Mammary epithelial cell (primary cell): ENCODE measurements at regions of chr4 and their contacts with region 1.

Region 1: DNA sequence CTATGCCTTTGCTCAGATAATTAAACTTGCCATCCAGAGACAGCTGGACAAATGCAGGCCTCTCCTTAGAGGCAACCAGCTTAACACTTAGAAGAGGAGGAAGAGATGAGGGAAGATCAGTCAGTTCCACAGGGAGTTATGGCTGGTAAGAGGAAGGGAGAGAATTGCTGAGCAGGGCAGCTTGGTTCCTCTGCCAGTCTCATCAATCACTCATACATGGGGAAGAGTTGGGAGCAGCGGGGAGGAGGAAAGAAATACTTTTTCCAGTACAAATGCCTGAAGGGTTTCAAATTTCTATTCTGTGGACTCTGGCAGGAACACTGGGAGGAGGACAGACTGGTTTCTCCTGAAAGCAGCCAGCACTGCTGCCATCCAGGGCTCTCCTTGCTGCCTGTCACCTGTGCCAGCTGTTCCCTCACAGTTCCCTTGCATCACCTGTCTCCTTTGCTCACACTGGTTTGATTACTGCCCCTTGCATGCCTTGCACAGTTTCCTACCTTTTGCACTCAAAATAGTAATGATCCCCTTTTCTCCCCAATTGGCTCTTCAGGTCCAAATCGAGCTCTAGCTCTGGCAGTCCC is 59.5 kb downstream of the PGRMC2 start:
- DNase-seq: no peak
- H3K4me3 ChIP-seq: no peak overlapping the region
- H3K27ac ChIP-seq: no peak overlapping the region
- H3K4me1 ChIP-seq: peaks cover 8% of the 10 kb centered on the region
- H3K27me3 ChIP-seq: no peaks in the 10 kb centered on the region
- CTCF ChIP-seq: no peak

Region 2: DNA sequence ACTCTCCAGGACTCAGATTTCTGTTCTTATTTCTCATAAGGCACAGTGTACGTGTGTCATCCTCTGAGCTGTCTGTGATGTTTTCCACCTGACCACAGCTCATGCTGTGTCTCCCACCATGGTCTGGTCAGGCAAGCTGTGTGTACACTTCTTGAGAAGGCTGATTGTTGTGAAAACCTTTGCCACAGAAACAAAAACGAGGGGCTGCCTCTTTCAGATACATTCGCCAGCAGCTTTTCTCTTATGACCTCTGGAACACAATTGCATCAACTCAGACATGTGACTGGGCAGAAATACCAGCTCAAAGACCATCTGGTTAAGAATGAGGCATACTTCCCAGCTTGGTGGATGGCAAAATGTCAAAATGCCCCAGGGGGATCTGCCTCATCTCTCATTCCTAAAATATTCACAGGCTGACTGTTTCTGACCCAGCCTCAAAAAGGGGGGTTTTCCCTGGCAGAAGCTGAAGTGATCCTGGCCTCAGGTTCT is 13.4 kb after region 1 on chr4:
- CTCF ChIA-PET with region 1: interaction called, 14 read pairs
- dilution Hi-C with region 1: no loop called
- in situ Hi-C with region 1: no loop called
- intact Hi-C with region 1: loop called (anchors 1 kb)
- DNase-seq: peak; percentile 95
- H3K4me3 ChIP-seq: no peak overlapping the region
- H3K27ac ChIP-seq: peak overlapping the region; percentile 61
- H3K4me1 ChIP-seq: peaks cover 22% of the 10 kb centered on the region
- H3K27me3 ChIP-seq: no peaks in the 10 kb centered on the region
- CTCF ChIP-seq: no peak